A673 (cell line): ENCODE measurements at regions of chr18 and their contacts with region 1.

Region 1: DNA sequence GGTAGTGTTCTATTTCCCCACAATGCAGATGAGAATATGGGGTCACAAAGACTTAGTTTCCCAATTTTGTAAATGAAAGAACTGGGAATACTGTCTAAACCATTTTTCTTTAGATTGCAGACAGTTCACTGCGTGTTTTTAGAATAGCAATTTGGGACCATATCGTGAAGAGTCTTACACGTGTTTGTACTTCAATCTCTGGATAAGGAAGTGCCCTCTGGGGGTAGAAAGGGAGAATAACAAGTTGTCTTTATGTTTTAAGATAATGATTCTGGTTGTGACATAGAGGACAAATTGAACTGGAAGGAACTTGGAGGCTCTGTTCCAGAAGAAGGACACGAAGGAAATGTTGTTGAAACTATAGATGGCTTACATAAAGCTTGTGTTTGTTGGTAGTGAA is 457.7 kb downstream of the CBLN2 start:
- DNase-seq: peak; percentile 62
- H3K4me3 ChIP-seq: no peak overlapping the region
- H3K27ac ChIP-seq: no peak overlapping the region
- H3K4me1 ChIP-seq: no peaks in the 10 kb centered on the region
- H3K27me3 ChIP-seq: no peaks in the 10 kb centered on the region
- CTCF ChIP-seq: peak; percentile 63

Region 2: GRCh38 chr18:71958605-71959004 is 127.8 kb before region 1 on chr18:
- CTCF ChIA-PET with region 1: no interaction called
- POLR2A ChIA-PET with region 1: no interaction called
- intact Hi-C with region 1: no loop called
- DNase-seq: peak; percentile 50
- H3K4me3 ChIP-seq: no peak overlapping the region
- H3K27ac ChIP-seq: no peak overlapping the region
- H3K4me1 ChIP-seq: no peaks in the 10 kb centered on the region
- H3K27me3 ChIP-seq: no peaks in the 10 kb centered on the region
- CTCF ChIP-seq: no peak

Region 3: DNA sequence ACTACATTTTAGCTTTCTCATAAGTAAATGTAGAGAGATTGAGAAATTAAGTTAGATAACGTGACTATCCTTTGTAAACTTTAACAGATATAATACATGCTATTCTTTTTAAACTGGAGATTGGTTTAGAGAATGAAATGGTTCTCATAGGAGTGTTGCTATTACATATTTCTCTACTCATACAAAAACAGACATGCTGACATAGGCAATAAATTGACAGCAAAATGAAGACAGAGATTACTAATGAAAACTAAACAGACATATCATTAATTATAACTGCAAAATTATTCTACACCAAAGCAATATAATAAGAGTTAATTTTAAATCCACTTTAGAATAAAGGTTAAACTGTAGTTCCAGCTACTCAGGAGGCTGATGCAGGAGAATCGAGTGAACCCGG is 230.1 kb after region 1 on chr18:
- CTCF ChIA-PET with region 1: no interaction called
- POLR2A ChIA-PET with region 1: no interaction called
- intact Hi-C with region 1: no loop called
- DNase-seq: no peak
- H3K4me3 ChIP-seq: no peak overlapping the region
- H3K27ac ChIP-seq: no peak overlapping the region
- H3K4me1 ChIP-seq: no peaks in the 10 kb centered on the region
- H3K27me3 ChIP-seq: no peaks in the 10 kb centered on the region
- CTCF ChIP-seq: no peak

Region 4: GRCh38 chr18:72544092-72544886 is 457.9 kb after region 1 on chr18 and contains the start of gene CBLN2:
- CTCF ChIA-PET with region 1: no interaction called
- POLR2A ChIA-PET with region 1: no interaction called
- intact Hi-C with region 1: loop called (anchors 10 kb)
- DNase-seq: peak; percentile 86
- H3K4me3 ChIP-seq: peak within 1 kb of the TSS; percentile 51
- H3K27ac ChIP-seq: no peak within 1 kb of the TSS
- H3K4me1 ChIP-seq: peaks cover 7% of the 10 kb centered on the region
- H3K27me3 ChIP-seq: peaks cover 22% of the 10 kb centered on the region
- CTCF ChIP-seq: peak; percentile 84
- total RNA-seq, gene CBLN2: 7.5 and 9.7 TPM in 2 replicates

Region 5: DNA sequence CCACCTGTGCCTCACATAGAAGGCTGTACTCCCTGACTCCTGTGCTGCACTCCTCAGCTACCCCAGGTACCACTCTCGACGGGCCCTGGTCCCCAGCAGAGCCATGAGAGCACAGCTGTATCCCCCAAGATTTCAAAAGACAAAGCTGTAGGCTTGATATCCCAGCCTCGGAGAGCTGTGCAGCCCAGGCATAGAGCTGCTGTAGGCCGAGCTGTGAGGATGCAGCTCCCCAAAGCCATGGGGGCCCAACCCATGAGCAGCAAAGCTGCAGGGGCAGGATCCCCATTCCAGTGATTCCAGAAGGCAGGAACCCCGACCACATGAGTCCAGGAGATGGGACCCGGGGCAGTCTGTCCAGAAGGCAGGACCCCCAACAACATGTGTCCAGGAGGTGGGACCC is 581.5 kb after region 1 on chr18:
- CTCF ChIA-PET with region 1: no interaction called
- POLR2A ChIA-PET with region 1: no interaction called
- intact Hi-C with region 1: no loop called
- DNase-seq: no peak
- H3K4me3 ChIP-seq: no peak overlapping the region
- H3K27ac ChIP-seq: no peak overlapping the region
- H3K4me1 ChIP-seq: no peaks in the 10 kb centered on the region
- H3K27me3 ChIP-seq: no peaks in the 10 kb centered on the region
- CTCF ChIP-seq: no peak